ENCODE measurements at regions of chr19 and their contacts with region 1.

Region 1: GRCh38 chr19:31214086-31214485 is 135.2 kb downstream of the TSHZ3 start:
- DNase-seq: peak; percentile 96
- ATAC-seq: peak; percentile 94
- H3K4me3 Mint-ChIP-seq: peak overlapping the region; percentile 61
- H3K27ac Mint-ChIP-seq: peak overlapping the region; percentile 99
- H3K4me1 Mint-ChIP-seq: peaks cover 36% of the 10 kb centered on the region
- H3K27me3 Mint-ChIP-seq: no peaks in the 10 kb centered on the region

Region 2: DNA sequence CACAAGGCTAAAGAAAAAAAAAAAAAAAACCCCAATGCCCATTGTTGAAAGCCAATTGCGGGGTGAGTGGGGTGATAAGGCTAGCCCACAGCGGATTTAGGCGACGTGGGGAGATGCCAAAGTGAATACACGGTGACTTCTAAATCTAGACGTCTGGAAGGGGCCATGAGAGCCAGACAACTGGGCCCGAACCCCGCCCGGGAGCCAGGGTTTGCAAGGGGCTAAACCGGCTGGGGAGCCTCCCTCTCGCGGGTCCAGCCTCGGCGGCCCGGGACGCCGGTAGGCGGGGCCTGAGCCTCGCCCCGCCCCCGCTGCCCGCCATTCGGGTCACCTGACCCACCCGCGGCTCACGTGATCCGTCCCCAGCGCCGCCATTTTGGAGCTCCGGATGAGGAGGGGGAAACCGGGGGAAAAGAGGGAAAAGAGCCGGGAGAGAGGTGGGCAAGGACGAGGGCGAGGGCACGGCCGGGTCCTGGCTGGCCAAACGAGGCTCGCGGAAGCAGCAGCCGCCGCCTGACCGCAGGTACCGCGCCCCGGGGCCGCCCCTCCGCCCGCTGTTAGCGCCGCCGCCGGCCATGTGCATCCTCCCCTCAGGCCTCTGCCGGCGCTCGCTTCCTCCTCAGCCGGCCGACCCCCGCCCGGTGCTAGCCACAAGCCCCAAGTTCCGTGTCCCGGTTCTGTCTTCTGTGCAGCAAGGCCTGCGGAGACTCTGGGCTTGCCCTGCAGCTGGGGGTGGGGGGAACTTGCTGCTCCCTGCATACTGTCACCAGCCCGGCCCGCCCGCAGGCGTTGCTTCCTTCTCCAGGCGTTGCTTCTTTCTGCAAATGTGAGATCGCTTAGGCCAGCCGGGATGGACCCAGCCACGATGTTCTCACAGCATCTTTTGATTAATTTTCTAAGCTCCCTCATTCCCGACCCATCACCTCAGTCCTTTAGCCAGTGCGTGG is 1131.4 kb after region 1 on chr19 and contains the start of gene ZNF507:
- CTCF ChIA-PET with region 1: no interaction called
- POLR2A ChIA-PET with region 1: no interaction called
- intact Hi-C with region 1: loop called in 1 of 2 experiments (anchors 5 kb)
- DNase-seq: peak; percentile 93
- ATAC-seq: peak; percentile 82
- H3K4me3 Mint-ChIP-seq: peak within 1 kb of the TSS; percentile 92
- H3K27ac Mint-ChIP-seq: peak within 1 kb of the TSS; percentile 95
- H3K4me1 Mint-ChIP-seq: peaks cover 42% of the 10 kb centered on the region
- H3K27me3 Mint-ChIP-seq: peaks cover 2% of the 10 kb centered on the region
- total RNA-seq, gene ZNF507: 25.2 to 27.6 TPM

Measured in activated CD4-positive, alpha-beta T cell treated with anti-CD3 and anti-CD28 coated beads for 36 hours (primary cell).